A673 (cell line): ENCODE measurements at regions of chr5 and their contacts with region 1.

Region 1: DNA sequence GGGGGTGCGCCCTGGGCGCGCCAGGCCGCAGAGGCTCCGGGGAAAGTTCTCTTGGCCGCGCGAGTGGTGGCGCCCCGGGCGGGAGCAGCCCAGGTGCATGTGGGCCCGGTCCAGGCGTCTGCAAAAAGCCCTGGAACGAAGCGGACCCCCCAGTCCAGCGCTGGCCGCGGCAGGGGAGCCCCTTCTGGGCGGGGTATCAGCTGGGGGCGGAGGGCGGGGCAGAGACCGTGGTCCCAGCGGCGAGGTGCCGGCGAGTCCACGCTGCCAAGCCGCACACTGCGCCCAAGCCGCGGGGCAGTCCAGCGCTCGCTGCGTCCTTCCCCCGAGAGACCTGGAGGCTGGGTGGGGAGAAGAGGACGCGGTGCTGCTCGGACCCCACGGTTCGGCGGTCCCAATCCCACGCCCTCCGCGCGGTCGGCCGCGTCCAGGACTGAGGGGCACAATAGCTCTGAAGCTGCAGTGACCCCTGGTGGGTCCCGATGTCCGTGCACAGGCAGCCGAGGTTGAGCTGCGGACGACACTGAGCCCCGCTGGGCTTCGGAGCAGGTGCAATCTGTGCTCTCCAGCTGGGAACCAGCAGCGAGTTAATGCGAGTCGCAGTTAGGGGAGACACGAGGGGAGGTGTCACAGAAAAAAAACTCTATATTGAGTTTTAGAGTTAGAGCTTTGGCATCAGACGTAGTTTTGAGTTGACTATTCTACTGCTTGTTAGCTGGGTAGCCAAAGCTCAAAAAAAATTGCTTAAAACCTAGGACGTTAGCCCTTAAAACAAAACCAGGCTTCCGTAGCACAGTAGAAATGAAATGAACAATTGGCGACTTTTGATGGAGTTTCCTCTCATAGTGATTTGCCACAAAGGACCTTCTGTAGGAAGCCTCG is 1.1 kb upstream of the EPB41L4A start:
- DNase-seq: peak; percentile 52
- H3K4me3 ChIP-seq: peak overlapping the region; percentile 39
- H3K27ac ChIP-seq: no peak overlapping the region
- H3K4me1 ChIP-seq: peaks cover 10% of the 10 kb centered on the region
- H3K27me3 ChIP-seq: peaks cover 65% of the 10 kb centered on the region
- CTCF ChIP-seq: peak; percentile 73

Region 2: DNA sequence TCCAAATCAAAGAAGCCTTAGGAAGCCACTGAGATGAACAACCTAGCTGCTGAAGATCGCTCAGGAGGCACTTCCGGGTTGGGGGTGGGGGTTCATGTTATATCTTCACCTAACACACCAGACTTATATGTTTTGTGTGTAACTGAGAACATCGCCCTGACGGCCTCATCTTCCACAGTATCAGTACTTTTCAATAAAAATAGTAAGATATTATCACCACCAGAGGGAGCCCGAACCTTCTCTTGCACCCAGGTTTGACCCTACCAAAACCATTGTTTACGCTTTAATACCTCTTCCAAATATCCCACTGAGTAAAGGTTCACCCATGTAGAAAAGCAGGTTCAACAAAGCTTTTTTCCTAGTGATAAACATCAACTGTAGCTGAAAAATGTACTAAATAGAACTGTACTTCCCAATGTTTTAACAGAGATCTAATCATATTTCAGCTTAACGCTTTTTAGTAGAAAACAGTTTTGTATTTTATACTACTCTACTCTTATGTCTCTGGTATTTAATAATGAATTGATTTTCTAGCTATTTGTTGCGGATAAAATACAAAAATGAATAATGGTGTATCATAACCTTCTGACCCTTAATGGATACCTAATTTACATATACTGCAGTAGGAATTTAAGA is 245.1 kb before region 1 on chr5:
- CTCF ChIA-PET with region 1: no interaction called
- POLR2A ChIA-PET with region 1: no interaction called
- intact Hi-C with region 1: loop called (anchors 2 kb)
- DNase-seq: peak; percentile 63
- H3K4me3 ChIP-seq: no peak overlapping the region
- H3K27ac ChIP-seq: no peak overlapping the region
- H3K4me1 ChIP-seq: no peaks in the 10 kb centered on the region
- H3K27me3 ChIP-seq: no peaks in the 10 kb centered on the region
- CTCF ChIP-seq: peak; percentile 75

Region 3: GRCh38 chr5:112210430-112211005 is 209.7 kb before region 1 on chr5:
- CTCF ChIA-PET with region 1: no interaction called
- POLR2A ChIA-PET with region 1: no interaction called
- intact Hi-C with region 1: loop called (anchors 1 kb)
- DNase-seq: peak; percentile 29
- H3K4me3 ChIP-seq: no peak overlapping the region
- H3K27ac ChIP-seq: no peak overlapping the region
- H3K4me1 ChIP-seq: no peaks in the 10 kb centered on the region
- H3K27me3 ChIP-seq: no peaks in the 10 kb centered on the region
- CTCF ChIP-seq: peak; percentile 69

Region 4: DNA sequence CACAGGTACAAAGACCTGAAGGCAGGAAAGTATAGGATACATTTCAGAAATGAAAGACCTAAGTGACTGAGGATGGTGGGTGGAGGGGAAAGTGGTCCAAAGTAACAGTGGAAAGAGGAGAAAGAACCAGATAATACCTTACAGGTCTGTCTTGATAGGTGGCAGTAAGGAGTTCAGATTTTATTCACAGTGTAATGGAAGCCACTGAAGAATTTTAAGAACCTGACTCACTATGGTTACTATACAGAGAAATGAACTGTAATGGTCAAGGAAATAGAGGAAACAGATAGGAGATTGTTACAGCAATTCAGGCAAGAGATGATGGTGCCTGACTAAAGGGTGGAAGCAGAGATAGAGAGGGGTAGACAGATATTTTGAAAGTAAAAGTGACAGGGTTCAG is 47.7 kb before region 1 on chr5:
- CTCF ChIA-PET with region 1: no interaction called
- POLR2A ChIA-PET with region 1: no interaction called
- intact Hi-C with region 1: no loop called
- DNase-seq: no peak
- H3K4me3 ChIP-seq: no peak overlapping the region
- H3K27ac ChIP-seq: no peak overlapping the region
- H3K4me1 ChIP-seq: no peaks in the 10 kb centered on the region
- H3K27me3 ChIP-seq: peaks cover 5% of the 10 kb centered on the region
- CTCF ChIP-seq: no peak